Posterior cingulate gyrus (tissue), 11 donors: ENCODE measurements at regions of chrX and their contacts with region 1.

Region 1: GRCh38 chrX:46796574-46797191 is 37.8 kb upstream of the SLC9A7 start:
- DNase-seq: peak; percentile 44 to 95 (median 73)

Region 2: DNA sequence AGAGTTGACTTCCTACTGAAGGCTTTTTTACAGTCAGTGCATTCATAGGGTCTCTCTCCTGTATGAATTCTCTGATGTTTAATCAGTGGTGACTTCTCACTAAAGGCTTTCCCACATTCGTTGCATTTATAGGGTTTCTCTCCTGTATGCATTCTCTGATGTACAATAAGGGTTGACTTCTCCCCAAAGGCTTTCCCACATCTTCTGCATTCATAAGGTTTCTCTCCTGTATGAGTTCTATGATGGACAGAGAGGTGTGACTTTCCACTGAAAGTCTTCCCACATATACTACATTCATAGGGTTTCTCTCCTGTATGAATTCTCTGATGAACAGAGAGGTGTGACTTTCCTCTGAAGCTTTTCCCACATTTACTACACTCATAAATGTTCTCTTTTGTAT is 296.6 kb before region 1 on chrX:
- intact Hi-C with region 1: no loop called
- DNase-seq: no peak

Region 3: DNA sequence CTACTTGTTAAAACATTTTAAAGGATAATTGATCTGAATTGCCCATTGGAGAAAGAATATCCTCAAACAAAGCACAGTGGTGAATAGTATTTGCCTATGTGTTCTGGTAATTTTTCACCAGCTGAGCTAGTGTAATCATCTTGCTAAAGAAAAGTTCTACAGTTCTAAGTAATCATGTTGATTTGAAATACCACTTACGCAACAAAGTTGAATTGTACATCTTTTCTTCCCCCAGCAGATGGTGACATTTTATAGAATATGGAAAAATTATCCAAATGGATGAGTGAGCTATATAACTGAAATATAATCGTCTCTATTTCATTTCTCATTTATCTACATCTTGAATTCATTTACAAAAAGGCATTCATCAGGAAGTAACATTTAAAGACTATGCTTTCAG is 241.7 kb before region 1 on chrX:
- intact Hi-C with region 1: loop called (anchors 10 kb)
- DNase-seq: no peak

Region 4: GRCh38 chrX:46758906-46759644 is 37.6 kb before region 1 on chrX and contains the start of gene SLC9A7:
- intact Hi-C with region 1: loop called (anchors 1 kb)
- DNase-seq: peak; percentile 37 to 95 (median 64)

Region 5: DNA sequence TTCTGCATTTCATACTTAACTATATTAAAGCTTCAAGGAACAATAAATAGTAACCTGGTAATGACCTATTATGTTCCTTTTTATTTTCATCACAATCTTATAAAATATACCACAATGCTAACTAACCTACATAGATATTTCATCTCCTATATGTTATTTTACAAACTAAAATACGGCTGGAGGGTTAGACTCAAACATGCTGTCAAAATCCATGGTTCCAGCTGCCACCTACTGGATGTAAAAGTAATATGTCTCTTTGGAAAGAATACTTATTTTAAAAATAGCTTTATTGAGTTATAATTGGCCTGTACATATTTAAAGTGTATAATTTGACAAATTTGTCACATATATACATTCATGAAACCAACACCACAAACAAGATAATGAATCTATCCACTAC is 296.6 kb after region 1 on chrX:
- intact Hi-C with region 1: loop called (anchors 5 kb)
- DNase-seq: peak in 1 of 10 donors; percentile 10